Heart right ventricle (tissue), 16 donors: ENCODE measurements at regions of chr6 and their contacts with region 1.

Region 1: DNA sequence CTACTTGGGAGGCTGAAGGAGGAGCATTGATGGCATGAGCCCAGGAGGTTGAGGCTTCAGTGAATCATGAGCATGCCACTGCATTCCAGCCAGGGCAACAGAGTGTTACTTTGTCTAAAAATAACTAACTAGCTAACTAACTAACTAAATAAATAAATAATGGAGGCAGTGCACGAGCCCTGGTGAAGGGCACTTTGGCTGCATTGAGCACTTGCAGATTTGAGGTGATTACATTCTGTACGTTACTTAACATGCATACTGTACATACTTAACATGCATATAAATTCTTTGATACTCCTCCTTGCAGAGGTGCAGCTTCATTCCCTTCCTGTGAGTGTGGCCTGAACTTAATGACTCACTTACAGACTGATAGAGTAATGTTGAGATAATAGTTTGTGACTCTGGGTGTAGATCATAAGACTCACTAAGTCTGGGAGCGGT is 10.7 kb downstream of the HLA-A start:
- DNase-seq: peak in 1 of 2 donors; percentile 62
- ATAC-seq: peak; percentile 54 to 89 (median 80)
- H3K4me3 ChIP-seq: no peak overlapping the region
- H3K27ac ChIP-seq: peak overlapping the region in 5 of 10 donors; percentile 30 to 65 (median 47)
- H3K4me1 ChIP-seq: peaks cover 0 to 14% (median 0%) of the 10 kb centered on the region in 9 donors
- H3K27me3 ChIP-seq: no peaks in the 10 kb centered on the region
- CTCF ChIP-seq: no peak

Region 2: GRCh38 chr6:29183594-29183993 is 769.4 kb before region 1 on chr6:
- intact Hi-C with region 1: no loop called
- DNase-seq: no peak
- ATAC-seq: no peak
- H3K4me3 ChIP-seq: no peak overlapping the region
- H3K27ac ChIP-seq: no peak overlapping the region
- H3K4me1 ChIP-seq: no peaks in the 10 kb centered on the region
- H3K27me3 ChIP-seq: no peaks in the 10 kb centered on the region
- CTCF ChIP-seq: no peak

Region 3: DNA sequence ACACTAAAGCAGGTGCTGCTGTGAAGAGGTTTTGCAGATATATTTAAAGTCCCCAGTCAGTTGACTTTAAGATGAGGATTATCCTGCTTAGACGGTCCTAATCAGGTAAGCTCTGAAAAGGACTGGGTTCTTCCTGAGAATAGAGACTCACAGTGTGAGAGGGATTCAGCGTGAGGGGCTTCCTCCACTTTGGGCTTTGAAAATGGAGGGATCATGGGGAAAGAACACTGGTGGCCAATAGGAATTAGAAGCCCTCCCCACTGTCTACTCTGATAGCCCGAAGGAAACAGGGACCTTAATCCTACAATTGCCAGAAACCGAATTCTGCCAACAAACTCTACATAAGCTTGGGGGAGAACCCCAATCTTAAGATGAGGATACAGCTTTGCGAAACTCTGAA is 155.1 kb before region 1 on chr6:
- intact Hi-C with region 1: loop called in 1 of 10 experiments (anchors 2 kb)
- DNase-seq: no peak
- ATAC-seq: no peak
- H3K4me3 ChIP-seq: no peak overlapping the region
- H3K27ac ChIP-seq: no peak overlapping the region
- H3K4me1 ChIP-seq: peaks cover 0 to 4% (median under 1%) of the 10 kb centered on the region in 9 donors
- H3K27me3 ChIP-seq: peaks cover 0 to 46% (median 29%) of the 10 kb centered on the region in 7 donors
- CTCF ChIP-seq: no peak

Region 4: DNA sequence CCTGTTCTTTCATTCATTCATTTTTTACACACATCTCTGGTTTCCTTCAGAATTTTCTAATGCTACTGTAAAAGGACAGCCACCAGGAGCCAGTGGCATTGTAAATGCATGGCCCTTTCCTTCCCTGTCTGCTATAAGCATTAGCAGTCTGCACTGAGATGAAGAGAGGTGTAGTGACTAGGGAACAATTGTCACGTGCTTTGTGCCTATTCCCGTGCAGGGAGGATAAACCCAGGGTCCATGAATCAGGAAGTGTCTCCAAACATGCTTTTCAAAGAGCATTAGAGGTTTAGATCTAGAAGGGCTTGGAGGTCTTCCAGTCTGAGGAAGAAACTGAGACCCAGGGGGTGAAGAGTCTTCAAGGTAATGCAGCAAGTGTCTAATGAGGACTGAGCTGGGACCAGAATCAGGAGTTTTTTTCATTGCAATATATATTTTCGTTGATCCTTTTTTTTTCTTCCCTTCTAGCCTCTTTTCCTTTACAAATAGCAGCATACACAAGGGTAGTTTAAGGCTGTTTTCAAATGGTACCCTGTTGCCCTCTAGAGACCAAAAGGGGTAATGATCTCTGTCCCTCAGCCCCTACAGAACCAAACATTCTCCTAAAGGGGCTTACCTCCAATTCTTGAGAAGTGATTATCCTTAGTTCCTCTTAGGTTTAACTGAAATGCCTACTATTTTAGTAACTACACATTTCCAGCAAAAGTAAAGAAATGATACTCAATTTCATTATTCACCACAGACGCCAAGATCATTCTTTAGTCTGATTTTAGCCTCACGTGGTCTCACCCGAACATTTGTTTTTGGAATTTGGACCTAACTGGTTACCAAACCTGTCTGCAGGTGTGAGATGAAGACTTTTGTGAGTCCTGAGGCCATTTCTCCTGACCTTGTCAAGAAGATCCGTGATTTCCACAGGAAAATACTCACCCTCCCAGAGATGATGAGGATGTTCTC is 216.9 kb after region 1 on chr6:
- intact Hi-C with region 1: no loop called
- DNase-seq: no peak
- ATAC-seq: peak in 5 of 8 donors; percentile 69 to 77 (median 72)
- H3K4me3 ChIP-seq: no peak overlapping the region
- H3K27ac ChIP-seq: no peak overlapping the region
- H3K4me1 ChIP-seq: peaks cover 0 to 10% (median 9%) of the 10 kb centered on the region in 9 donors
- H3K27me3 ChIP-seq: peaks cover 7 to 86% (median 69%) of the 10 kb centered on the region in 7 donors
- CTCF ChIP-seq: peak; percentile 45 to 82 (median 73)